ENCODE measurements at regions of chr6 and their contacts with region 1.

Region 1: GRCh38 chr6:108728826-108729225 is 119.4 kb upstream of the ARMC2 start:
- DNase-seq: no peak
- ATAC-seq: no peak
- H3K4me3 ChIP-seq: no peak overlapping the region
- H3K27ac ChIP-seq: no peak overlapping the region
- H3K4me1 ChIP-seq: peaks cover 19% of the 10 kb centered on the region
- H3K27me3 ChIP-seq: no peaks in the 10 kb centered on the region
- CTCF ChIP-seq: no peak

Region 2: DNA sequence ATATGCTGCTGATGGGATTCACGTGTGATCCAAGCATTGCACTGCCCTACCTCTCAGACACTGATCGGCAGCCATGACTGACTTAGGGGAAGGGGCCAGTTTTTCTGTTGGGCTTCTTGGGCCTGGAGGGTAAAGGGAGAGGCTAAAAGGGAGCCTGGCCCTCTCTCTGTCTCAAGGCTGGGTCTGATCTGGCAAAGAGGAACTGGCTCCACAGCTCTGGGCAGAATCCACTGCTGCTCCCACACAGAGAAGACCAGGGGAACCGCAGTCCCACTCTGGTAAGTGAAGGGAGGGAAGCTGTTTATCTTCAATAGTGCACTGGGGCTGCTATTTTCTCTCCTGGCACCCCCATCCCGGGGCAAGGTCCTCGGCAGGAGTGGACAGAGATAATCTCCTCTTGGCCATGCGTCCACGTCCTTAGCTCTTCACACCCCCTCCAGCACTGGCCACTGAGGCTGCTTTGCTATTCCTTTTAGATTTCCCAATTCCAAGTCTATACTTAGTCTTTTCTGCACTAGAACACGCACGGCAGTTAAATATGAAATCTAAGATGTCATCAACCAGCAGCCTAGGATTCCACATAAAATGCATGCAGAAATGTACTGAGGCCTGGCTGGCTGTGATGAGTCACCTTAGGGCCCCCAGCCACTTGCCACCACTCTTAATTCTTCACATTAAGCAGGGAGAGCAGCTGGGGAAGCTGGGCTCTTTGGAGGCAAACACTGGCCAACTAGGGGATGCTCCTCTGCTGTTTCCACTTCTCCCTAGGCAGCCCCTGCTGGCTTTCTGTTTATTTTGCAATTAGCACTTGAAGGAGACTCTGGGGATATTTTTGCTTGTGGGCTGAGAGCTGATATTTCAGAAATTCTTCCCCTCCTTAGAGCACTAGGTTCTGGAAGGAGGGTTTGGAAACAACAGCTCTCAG is 31.6 kb after region 1 on chr6:
- CTCF ChIA-PET with region 1: no interaction called
- POLR2A ChIA-PET with region 1: interaction called, 15 read pairs
- intact Hi-C with region 1: no loop called
- DNase-seq: no peak
- ATAC-seq: no peak
- H3K4me3 ChIP-seq: no peak overlapping the region
- H3K27ac ChIP-seq: no peak overlapping the region
- H3K4me1 ChIP-seq: no peaks in the 10 kb centered on the region
- H3K27me3 ChIP-seq: no peaks in the 10 kb centered on the region
- CTCF ChIP-seq: no peak

Region 3: DNA sequence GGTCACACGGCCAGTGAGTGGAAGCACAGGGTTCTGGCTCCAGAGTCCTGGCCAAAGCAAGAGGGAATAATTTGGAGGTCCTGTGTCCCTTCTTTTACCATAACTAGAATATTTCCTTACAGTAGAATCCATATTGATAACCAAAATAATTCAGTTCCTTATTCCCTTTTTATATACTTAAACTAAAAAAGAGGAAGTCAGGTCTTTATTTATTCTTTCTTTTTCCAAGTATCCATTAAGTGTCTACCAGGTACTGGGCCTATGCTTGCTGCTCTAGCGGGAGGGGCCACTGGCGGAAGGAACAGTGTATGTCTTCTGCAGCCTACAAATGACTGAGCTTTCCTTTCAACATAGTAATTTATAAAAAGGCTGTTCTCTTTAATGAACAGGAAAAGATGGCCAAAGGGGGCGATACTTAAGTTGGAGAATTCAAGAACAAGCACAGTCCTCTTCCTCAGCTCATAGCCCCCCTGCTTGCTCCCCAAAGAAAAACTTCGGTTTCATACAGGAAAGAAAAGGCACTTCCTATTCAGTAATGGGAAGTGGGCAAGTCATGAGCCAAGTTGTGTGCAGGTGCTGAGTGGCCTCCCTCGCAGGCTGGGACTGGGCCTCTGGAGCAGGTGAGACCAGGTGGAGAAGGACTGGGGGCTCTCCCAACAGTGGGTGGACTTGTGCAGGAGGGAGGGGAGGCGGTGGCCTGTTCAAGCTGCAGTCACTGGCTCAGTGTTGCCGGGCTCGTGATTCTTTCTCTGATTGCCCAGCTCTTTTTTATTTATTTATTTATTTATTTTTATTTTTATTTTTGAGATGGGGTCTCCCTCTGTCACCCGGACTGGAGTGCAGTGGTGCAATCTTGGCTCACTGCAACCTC is 230.3 kb after region 1 on chr6:
- CTCF ChIA-PET with region 1: no interaction called
- POLR2A ChIA-PET with region 1: no interaction called
- intact Hi-C with region 1: no loop called
- DNase-seq: no peak
- ATAC-seq: no peak
- H3K4me3 ChIP-seq: no peak overlapping the region
- H3K27ac ChIP-seq: no peak overlapping the region
- H3K4me1 ChIP-seq: no peaks in the 10 kb centered on the region
- H3K27me3 ChIP-seq: no peaks in the 10 kb centered on the region
- CTCF ChIP-seq: no peak